Stomach (tissue), 19 donors: ENCODE measurements at regions of chr9 and their contacts with region 1.

Region 1: DNA sequence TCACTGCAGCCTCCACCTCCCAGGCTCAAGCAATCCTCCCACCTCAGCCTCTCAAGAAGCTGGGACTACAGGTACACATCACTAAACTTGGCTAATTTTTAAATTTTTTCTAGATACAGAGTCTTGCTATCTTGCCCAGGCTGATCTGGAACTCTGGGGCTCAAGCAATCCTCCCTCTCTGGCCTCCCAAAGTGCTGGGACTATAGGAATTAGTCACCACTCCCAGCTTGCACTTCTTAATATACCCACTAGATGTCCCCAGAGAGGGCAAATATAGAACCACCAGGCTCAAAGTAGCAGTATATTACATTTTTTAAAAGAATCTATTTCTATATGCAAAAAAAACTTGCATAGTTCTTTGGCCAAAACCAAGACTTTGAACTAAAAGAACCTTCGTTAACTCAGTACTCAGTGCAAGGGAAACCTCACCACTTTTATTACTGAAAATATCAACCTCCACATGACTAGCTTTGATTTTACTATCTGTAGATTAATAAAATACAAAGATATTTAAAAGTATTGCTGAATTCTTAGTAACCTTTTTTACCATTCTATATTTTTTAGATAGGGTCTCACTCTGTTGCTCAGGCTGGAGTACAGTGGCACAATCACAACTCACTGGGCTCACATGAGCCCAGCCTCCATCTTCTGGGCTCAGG is 25.8 kb upstream of the HSD17B3 start:
- DNase-seq: peak; percentile 35 to 80
- H3K4me3 ChIP-seq: no peak overlapping the region
- H3K27ac ChIP-seq: no peak overlapping the region
- H3K4me1 ChIP-seq: no peaks in the 10 kb centered on the region
- H3K27me3 ChIP-seq: no peaks in the 10 kb centered on the region
- CTCF ChIP-seq: peak in 5 of 7 experiments; percentile 70 to 94 (median 88)
- EP300 ChIP-seq: no peak
- POLR2A ChIP-seq: no peak

Region 2: GRCh38 chr9:96020792-96021550 is 306.9 kb before region 1 on chr9:
- intact Hi-C with region 1: no loop called
- DNase-seq: peak in 1 of 2 donors; percentile 78
- H3K4me3 ChIP-seq: peak overlapping the region; percentile 57 to 67 (median 62)
- H3K27ac ChIP-seq: peak overlapping the region; percentile 74 to 93 (median 84)
- H3K4me1 ChIP-seq: peaks cover 23 to 37% (median 30%) of the 10 kb centered on the region in 4 donors
- H3K27me3 ChIP-seq: peaks cover 0 to 38% (median 19%) of the 10 kb centered on the region in 3 donors
- CTCF ChIP-seq: no peak
- EP300 ChIP-seq: no peak
- POLR2A ChIP-seq: no peak

Region 3: GRCh38 chr9:96661711-96662110 is 333.9 kb after region 1 on chr9:
- intact Hi-C with region 1: loop called (anchors 10 kb)
- DNase-seq: no peak
- H3K4me3 ChIP-seq: no peak overlapping the region
- H3K27ac ChIP-seq: no peak overlapping the region
- H3K4me1 ChIP-seq: peaks cover 0 to 11% (median 4%) of the 10 kb centered on the region in 4 donors
- H3K27me3 ChIP-seq: no peaks in the 10 kb centered on the region
- CTCF ChIP-seq: no peak
- EP300 ChIP-seq: no peak
- POLR2A ChIP-seq: no peak